ENCODE measurements at regions of chr3 and their contacts with region 1.

Region 1: DNA sequence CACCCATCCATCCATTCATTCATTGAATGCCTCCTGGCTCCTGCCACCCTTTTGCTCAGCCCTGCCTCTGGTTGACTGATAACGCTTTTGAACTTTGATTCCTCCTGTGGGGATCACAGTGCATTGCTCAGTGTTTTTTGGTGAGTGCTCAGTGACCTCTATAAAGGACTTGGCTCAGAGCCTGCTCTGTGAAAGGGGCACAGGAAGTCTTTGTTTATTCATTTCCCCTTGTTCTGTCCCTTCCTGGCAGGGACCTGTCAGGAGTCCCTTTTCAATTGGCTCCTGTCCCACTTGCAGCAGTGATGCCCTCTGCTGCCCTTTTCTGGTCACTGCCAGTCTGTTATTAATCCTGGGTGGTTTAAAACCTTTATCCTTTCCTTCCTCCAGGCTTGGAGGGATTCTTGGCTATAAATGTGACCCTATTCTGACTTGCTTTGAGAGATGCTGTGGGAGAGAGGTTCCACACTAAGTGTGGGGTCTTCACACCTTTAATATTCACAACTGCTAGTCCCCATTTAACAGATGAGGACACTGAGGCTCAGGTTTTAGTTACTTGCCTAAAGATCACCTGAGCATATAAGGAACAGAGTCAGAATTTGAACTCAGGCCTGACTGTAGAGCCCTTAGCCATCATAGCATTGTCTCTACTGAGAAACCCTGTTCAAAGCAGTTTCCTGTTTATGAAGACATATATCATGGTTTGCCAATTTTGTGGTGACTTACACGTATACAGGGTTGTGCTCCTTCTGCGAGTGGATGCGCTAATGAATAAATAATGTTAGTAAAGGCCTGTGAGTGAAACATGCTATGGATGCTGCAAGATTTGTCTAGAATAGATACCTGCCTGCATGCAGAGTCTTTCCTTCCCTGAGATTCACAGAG is 23.2 kb upstream of the TATDN2 start:
- DNase-seq: peak; percentile 87
- H3K4me3 ChIP-seq: no peak overlapping the region
- H3K27ac ChIP-seq: no peak overlapping the region
- H3K4me1 ChIP-seq: peaks cover 50% of the 10 kb centered on the region
- H3K27me3 ChIP-seq: no peaks in the 10 kb centered on the region
- CTCF ChIP-seq: peak; percentile 76 to 88
- POLR2A ChIP-seq: no peak

Region 2: GRCh38 chr3:9362731-9363530 is 862.1 kb before region 1 on chr3 and contains the start of gene THUMPD3:
- CTCF ChIA-PET with region 1: no interaction called
- POLR2A ChIA-PET with region 1: no interaction called
- dilution Hi-C with region 1: no loop called
- intact Hi-C with region 1: no loop called
- DNase-seq: peak; percentile 90
- H3K4me3 ChIP-seq: peak within 1 kb of the TSS; percentile 50 to 72 (median 55)
- H3K27ac ChIP-seq: peak within 1 kb of the TSS; percentile 97
- H3K4me1 ChIP-seq: peaks cover 7% of the 10 kb centered on the region
- H3K27me3 ChIP-seq: no peaks in the 10 kb centered on the region
- CTCF ChIP-seq: no peak
- POLR2A ChIP-seq: peak; percentile 95
- total RNA-seq, gene THUMPD3: 22.7 and 26.5 TPM in 2 replicates

Region 3: DNA sequence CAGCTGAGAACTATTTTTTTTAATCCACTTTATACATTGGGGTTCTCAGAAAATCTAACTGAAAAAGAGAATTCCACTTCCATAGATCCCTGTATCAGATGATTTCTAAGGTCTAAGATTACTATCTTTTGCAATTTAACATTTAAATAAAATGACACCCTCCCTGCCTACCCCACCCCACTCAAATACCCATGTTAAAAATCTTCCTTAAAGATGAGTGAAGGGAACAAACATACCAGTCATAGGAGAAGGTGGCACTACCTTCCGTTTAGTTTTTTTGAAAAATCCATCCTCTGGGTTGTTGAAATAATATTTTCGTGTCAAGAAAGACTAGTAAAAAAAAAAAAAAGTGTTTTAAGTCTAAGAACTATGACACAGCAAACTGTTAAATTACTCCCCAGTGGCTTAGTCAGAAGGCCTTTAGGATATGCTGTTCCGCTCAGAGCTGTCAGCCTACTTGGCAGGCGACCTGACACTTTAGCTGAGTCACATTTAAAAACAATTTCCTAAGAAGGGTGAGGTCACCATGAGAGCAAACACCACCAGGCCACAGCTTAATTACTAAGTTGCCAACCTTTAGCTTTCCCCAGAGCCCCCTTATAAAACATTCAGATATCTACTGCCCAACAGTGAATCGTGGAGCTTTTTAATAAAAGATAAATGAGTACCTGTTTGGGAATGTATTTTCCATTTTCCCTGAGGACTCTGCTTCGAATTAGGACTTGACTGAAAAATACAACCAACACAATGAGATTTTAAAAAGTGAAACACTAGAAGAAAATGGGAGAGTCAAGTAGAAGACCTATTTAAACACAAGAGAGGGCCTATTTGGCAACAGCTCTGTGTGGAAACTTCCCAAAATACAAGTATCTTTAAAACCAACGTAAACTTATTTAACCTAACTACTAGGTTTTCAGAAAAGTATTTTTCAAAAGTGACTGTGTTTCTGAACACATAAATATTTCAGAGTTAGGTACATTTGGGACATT is 248.0 kb before region 1 on chr3:
- CTCF ChIA-PET with region 1: no interaction called
- POLR2A ChIA-PET with region 1: no interaction called
- dilution Hi-C with region 1: no loop called
- intact Hi-C with region 1: loop called (anchors 2 kb)
- DNase-seq: peak; percentile 96
- H3K4me3 ChIP-seq: no peak overlapping the region
- H3K27ac ChIP-seq: peak overlapping the region; percentile 94
- H3K4me1 ChIP-seq: peaks cover 18% of the 10 kb centered on the region
- H3K27me3 ChIP-seq: no peaks in the 10 kb centered on the region
- CTCF ChIP-seq: no peak
- POLR2A ChIP-seq: no peak

Region 4: DNA sequence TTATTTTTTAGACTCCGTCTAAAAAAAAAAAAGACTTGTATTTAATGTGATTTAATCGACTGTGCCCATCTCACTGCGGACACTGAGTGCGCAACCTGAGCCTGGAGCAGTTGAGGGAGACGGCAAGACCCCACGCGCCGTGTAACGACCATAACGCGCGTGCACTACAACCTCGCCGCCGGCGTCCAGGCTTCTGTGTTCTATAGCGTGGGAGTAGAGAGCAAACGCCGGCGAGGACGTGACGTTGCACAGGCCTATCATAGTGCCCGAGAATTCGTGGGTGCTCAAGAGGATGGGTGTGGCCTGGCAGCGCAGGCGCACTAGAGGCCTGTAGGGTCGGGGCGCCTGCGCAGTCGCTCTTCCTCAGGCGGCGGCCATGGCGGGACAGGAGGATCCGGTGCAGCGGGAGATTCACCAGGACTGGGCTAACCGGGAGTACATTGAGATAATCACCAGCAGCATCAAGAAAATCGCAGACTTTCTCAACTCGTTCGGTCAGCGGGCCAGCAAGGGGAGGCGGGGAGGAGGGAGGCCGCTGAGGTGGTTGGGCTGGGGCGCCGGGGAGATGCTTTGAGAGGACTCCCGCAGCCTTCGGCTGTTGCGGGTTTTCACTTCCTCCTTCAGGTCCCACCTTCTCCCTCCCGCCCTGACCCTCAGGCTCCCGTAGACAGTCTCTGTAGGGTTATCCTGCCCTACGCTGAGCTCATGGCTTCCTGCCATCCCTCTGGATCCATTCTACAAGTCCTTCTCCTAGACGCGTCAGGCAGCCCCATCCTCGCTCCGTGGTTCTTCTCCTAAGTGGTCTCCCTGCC is 109.5 kb before region 1 on chr3 and contains the start of gene BRK1:
- CTCF ChIA-PET with region 1: no interaction called
- POLR2A ChIA-PET with region 1: no interaction called
- dilution Hi-C with region 1: no loop called
- intact Hi-C with region 1: loop called (anchors 1 kb)
- DNase-seq: peak; percentile 96
- H3K4me3 ChIP-seq: peak within 1 kb of the TSS; percentile 63 to 87 (median 68)
- H3K27ac ChIP-seq: peak within 1 kb of the TSS; percentile 63
- H3K4me1 ChIP-seq: peaks cover 9% of the 10 kb centered on the region
- H3K27me3 ChIP-seq: no peaks in the 10 kb centered on the region
- CTCF ChIP-seq: no peak
- POLR2A ChIP-seq: peak; percentile 98
- total RNA-seq, gene BRK1: 123 and 133 TPM in 2 replicates

Region 5: DNA sequence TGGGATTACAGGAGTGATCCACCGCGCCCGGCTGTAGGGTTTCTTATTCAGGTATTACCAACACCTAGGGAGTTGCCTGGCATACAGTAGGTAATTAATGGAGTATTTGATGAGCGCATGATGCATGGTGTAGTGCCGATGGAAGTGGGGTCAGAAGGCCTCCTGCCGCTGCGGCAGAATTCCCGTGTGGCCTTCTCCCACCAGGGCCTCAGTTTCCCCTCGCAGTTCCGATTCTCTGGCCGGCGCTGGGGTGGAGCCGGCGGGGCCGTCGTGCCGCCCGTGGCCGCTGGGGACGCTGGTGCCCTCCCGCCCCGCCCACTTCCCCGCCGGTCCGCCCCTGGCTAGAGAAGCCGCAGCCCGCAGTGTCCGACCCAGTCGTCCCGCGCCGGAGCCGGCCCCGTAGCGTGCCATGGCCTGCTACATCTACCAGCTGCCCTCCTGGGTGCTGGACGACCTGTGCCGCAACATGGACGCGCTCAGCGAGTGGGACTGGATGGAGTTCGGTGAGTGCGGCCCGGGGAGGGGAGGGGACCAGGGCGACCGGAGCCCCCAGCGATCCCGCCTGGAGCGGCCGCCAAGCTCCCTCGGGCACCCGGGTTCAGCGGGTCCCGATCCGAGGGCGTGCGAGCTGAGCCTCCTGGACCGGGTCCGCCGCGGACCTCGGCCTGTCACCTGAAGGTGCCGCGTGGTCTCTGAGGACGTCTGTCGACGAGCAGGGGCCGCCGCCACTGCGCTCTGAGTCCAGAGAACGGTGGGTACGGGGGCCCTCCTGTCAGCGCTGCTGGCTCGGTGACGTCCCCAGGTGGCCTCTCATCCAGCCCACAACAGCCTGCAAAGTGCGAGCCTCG is 60.3 kb before region 1 on chr3 and contains the start of gene IRAK2:
- CTCF ChIA-PET with region 1: no interaction called
- POLR2A ChIA-PET with region 1: no interaction called
- dilution Hi-C with region 1: no loop called
- intact Hi-C with region 1: loop called (anchors 1 kb)
- DNase-seq: peak; percentile 66
- H3K4me3 ChIP-seq: peak within 1 kb of the TSS; percentile 63 to 79 (median 78)
- H3K27ac ChIP-seq: peak within 1 kb of the TSS; percentile 42
- H3K4me1 ChIP-seq: peaks cover 2% of the 10 kb centered on the region
- H3K27me3 ChIP-seq: no peaks in the 10 kb centered on the region
- CTCF ChIP-seq: peak; percentile 40 to 79
- POLR2A ChIP-seq: peak; percentile 75
- total RNA-seq, gene IRAK2: 10.0 and 11.1 TPM in 2 replicates

Region 6: DNA sequence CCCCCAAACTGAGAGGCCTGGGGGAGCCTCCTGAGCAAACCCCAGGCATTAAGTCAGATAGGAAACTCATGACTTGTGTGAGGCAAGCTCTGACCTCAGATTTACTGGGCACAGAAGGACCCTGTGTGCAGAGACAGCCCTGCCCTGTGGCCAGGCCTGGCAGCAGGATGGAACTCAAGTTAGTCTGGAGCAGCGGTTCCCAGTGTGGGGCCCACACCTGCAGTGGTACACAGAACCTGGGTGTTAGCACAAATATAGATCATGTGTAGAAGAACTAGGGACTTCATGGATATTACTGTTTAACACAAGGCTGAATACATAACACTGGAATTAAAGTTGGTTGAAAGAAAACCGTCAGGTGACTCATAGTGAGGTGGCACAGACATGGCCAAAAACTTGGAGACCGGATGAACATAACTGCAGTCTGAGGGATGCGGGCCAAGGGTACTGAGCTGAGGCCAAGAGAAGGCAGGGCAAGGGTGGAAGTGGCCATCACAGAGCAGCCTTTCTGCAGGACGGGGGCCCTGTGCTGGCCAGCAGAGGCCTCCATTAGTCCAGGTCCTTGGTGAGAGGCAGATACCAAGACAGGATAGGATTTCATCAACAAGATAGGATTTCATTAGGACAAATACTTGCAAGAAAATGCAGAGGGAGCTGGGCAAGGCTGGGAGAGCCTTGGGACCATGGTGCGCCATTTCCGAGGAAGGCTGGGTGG is 19.4 kb before region 1 on chr3:
- CTCF ChIA-PET with region 1: interaction called, 10 read pairs
- POLR2A ChIA-PET with region 1: no interaction called
- dilution Hi-C with region 1: no loop called
- intact Hi-C with region 1: loop called (anchors 1 kb)
- DNase-seq: peak; percentile 93
- H3K4me3 ChIP-seq: no peak overlapping the region
- H3K27ac ChIP-seq: peak overlapping the region; percentile 94
- H3K4me1 ChIP-seq: peaks cover 44% of the 10 kb centered on the region
- H3K27me3 ChIP-seq: no peaks in the 10 kb centered on the region
- CTCF ChIP-seq: peak in 1 of 2 donors; percentile 3
- POLR2A ChIP-seq: peak; percentile 51

Measured in endothelial cell of umbilical vein (primary cell).